Cardiac septum (tissue), 1 donor: ENCODE measurements at regions of chr1 and their contacts with region 1.

Region 1: GRCh38 chr1:112998592-112999235 is 42.7 kb upstream of the SLC16A1 start:
- DNase-seq: no peak

Region 2: GRCh38 chr1:112982853-112983536 is 15.7 kb before region 1 on chr1:
- intact Hi-C with region 1: loop called (anchors 2 kb)
- DNase-seq: no peak